CD4-positive, alpha-beta T cell (primary cell): ENCODE measurements at regions of chr10 and their contacts with region 1.

Region 1: DNA sequence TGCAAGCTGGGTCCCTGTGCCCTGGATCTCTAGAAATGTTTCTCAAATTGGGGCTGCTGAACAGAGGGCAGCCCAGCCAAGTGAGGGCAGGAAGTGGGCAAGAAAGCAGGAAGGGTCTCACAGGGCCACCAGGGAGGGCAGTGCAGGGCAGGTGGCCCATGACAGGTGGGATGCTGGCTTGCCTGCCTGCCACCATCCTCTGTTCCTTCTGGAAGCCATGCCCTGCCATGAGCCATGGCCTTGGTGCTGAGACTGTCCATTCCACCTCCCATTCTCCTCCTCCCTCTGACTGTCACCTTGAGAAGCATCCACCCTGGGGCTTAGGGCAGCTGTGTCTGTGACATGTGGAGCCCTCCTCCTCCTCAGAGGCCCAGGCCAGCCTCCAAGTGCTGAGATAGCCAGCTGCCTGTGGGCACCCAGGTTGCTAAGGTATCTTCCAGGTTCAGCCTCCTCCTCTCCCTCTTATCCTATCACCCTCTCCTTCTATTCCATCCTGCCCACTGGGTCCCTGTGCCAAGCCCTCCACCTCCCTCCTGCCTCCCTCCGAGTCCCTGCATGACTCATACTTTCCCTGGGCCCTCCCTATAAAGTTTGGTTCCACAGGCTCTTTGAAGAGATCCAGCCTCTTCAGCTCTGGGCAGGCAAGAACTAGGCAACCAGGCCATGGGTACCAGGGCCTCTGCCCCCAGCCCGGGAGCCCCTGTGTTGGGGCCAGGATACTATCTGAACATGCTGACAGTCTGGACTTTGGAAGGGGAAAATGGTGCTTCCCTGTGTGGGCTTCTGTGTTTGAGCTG is 1.3 kb downstream of the VSIR start:
- DNase-seq: peak in 3 of 14 experiments; percentile 44 to 54 (median 52)
- ATAC-seq: no peak
- H3K4me3 ChIP-seq: peak overlapping the region; percentile 90
- H3K4me3 Mint-ChIP-seq: peak overlapping the region; percentile 94
- H3K27ac ChIP-seq: peak overlapping the region; percentile 75 to 88
- H3K27ac Mint-ChIP-seq: peak overlapping the region; percentile 95
- H3K4me1 ChIP-seq: peaks cover 78% of the 10 kb centered on the region
- H3K4me1 Mint-ChIP-seq: peaks cover 88% of the 10 kb centered on the region
- H3K27me3 ChIP-seq: no peaks in the 10 kb centered on the region
- H3K27me3 Mint-ChIP-seq: no peaks in the 10 kb centered on the region
- CTCF ChIP-seq: no peak

Region 2: DNA sequence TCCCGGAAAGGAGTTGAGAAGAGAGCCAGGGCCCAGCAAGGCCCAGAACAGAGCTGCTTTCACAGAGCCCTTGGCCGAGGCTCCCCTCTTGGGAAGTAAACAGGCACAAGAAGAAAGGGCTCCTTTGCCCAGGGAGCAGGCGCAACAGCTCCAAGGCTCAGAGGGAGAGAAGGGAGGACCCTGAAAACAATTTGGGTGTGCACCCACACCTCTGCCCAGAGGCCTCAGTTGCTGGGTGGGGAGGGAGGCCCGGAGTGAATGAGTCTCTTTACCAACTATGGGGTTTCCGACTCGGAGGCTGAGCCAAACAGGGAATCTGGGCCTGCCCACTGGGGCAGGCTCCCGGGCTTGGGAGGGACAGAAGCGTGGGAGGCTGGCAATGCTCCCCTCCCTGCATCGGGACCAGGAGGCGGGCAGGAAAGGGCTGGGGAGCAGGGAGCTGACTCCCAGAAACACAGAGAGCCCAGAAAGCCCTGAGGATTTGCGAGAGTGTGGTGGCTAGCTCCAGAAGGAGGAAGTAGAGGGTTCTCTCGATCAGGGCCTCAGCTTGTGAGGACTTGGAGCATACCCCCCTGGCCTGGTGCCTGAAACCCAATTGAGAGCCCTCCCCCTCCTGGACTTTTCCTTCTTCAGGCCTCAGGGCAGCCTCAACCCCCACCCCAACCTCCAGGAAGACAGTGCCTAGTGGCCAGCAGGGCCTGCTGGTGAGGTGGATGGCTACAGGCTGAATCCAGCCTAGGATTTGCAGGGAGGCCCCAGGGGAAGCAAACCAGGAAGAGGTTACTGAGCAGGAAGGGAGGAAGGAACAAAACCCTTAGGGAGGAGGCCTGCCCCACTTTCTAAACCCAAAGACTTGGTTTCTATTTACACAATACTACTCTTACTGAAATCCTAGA is 58.6 kb before region 1 on chr10:
- CTCF ChIA-PET with region 1: interaction called, 18 read pairs
- POLR2A ChIA-PET with region 1: interaction called, 21 read pairs
- intact Hi-C with region 1: loop called in 1 of 2 experiments (anchors 5 kb)
- DNase-seq: peak in 5 of 14 experiments; percentile 17 to 64 (median 54)
- ATAC-seq: peak; percentile 32
- H3K4me3 ChIP-seq: peak overlapping the region; percentile 39
- H3K4me3 Mint-ChIP-seq: peak overlapping the region; percentile 80
- H3K27ac ChIP-seq: peak overlapping the region; percentile 74 to 90
- H3K27ac Mint-ChIP-seq: peak overlapping the region; percentile 98
- H3K4me1 ChIP-seq: peaks cover 83% of the 10 kb centered on the region
- H3K4me1 Mint-ChIP-seq: peaks cover 74% of the 10 kb centered on the region
- H3K27me3 ChIP-seq: no peaks in the 10 kb centered on the region
- H3K27me3 Mint-ChIP-seq: no peaks in the 10 kb centered on the region
- CTCF ChIP-seq: no peak

Region 3: GRCh38 chr10:71740069-71740468 is 31.9 kb before region 1 on chr10:
- CTCF ChIA-PET with region 1: interaction called, 27 read pairs
- POLR2A ChIA-PET with region 1: interaction called, 416 read pairs
- intact Hi-C with region 1: no loop called
- DNase-seq: no peak
- ATAC-seq: no peak
- H3K4me3 ChIP-seq: no peak overlapping the region
- H3K4me3 Mint-ChIP-seq: peak overlapping the region; percentile 77
- H3K27ac ChIP-seq: peak overlapping the region; percentile 42 to 51
- H3K27ac Mint-ChIP-seq: peak overlapping the region; percentile 96
- H3K4me1 ChIP-seq: peaks cover 100% of the 10 kb centered on the region
- H3K4me1 Mint-ChIP-seq: peaks cover 100% of the 10 kb centered on the region
- H3K27me3 ChIP-seq: no peaks in the 10 kb centered on the region
- H3K27me3 Mint-ChIP-seq: no peaks in the 10 kb centered on the region
- CTCF ChIP-seq: no peak

Region 4: GRCh38 chr10:71756311-71757191 is 15.5 kb before region 1 on chr10:
- CTCF ChIA-PET with region 1: interaction called, 35 read pairs
- POLR2A ChIA-PET with region 1: interaction called, 416 read pairs
- intact Hi-C with region 1: loop called in 1 of 2 experiments (anchors 1 kb)
- DNase-seq: peak in 4 of 14 experiments; percentile 41 to 75 (median 72)
- ATAC-seq: peak; percentile 82
- H3K4me3 ChIP-seq: peak overlapping the region; percentile 18
- H3K4me3 Mint-ChIP-seq: peak overlapping the region; percentile 66
- H3K27ac ChIP-seq: peak overlapping the region; percentile 86 to 87
- H3K27ac Mint-ChIP-seq: peak overlapping the region; percentile 93
- H3K4me1 ChIP-seq: peaks cover 94% of the 10 kb centered on the region
- H3K4me1 Mint-ChIP-seq: peaks cover 88% of the 10 kb centered on the region
- H3K27me3 ChIP-seq: no peaks in the 10 kb centered on the region
- H3K27me3 Mint-ChIP-seq: no peaks in the 10 kb centered on the region
- CTCF ChIP-seq: no peak